ENCODE measurements at regions of chr2 and their contacts with region 1.

Region 1: DNA sequence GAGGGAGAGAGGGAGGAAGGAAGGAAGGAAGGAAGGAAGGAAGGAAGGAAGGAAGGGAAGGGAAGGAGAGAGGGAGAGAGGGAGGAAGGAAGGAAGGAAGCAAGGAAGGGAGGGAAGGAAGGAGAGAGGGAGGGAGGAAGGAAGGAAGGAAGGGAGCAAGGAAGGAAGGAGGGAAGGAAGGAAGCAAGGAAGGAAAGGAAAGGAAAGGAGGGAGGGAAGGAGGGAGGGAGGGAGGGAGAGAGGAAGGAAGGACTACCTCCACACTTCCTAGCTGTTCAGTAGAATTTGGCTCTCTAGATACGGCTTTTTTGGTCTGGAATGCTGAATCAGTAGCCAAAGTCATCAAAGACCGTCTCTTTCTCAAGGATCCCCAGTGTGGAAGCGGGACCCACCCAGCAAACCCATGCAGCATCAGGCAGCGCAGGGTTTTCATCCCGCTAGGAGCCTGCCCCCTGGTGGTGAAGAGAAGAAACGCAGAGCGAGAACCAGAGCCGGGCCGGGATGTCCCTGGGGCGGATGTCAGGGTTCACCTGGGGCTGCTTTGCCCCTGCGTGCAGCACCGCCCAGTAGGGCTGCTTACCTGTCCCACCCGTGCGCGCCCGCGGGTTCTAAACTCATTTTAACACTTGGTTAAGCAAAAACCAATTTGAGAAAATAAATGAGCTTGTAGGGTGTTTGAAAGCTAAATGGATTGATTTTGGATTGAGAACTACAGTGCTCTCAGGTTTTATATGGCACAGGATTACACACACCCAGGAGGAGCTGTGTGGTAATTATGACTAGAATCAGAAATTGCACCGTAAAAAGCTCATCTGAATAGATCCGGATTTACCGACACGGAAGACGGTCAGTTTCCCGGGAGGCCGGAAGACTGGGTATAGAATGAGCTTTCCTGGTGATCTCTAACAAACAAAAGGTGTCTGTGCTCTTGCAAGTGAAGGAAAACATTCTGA is 48.1 kb upstream of the ARL4C start:
- DNase-seq: peak; percentile 45 to 84 (median 71)
- ATAC-seq: peak; percentile 86 to 94 (median 92)
- H3K4me3 ChIP-seq: no peak overlapping the region
- H3K4me3 Mint-ChIP-seq: no peak overlapping the region
- H3K27ac ChIP-seq: no peak overlapping the region
- H3K27ac Mint-ChIP-seq: no peak overlapping the region
- H3K4me1 ChIP-seq: peaks cover 0 to 8% of the 10 kb centered on the region in 2 experiments
- H3K4me1 Mint-ChIP-seq: peaks cover 4 to 6% (median 6%) of the 10 kb centered on the region in 3 donors
- H3K27me3 ChIP-seq: peaks cover 4 to 19% of the 10 kb centered on the region in 2 experiments
- H3K27me3 Mint-ChIP-seq: peaks cover 18 to 33% of the 10 kb centered on the region in 2 donors

Region 2: DNA sequence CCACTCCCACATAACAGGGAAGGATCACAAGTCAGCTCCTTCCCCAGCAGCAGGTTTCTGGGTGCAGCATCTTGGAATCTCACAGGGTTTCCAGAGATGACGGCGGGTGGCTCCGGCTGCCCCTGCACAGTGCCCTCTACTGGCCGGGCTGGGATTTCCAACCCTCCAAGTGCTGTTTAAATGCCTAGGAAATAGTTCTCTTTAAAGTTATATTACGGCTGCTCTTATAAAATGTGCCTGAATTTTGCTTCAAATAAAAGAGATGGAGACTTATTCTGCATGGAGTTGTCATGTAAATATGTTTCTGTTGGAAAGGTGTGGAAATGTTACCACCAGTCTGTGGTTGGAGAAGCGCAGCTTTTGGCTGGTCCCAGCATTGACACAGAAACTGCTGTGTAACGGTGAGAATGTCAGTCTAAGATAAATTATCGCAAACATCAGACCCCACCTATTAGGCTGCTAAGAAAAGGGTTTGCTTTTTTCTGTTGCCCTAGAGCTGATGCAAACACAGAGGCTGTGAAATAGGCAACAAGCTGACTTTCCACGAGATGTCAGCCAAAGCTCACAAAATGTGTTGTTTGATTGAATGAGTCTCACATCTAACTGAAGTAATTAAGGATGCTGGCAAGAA is 687.3 kb before region 1 on chr2:
- CTCF ChIA-PET with region 1: interaction called in 1 of 2 experiments, 10 read pairs
- POLR2A ChIA-PET with region 1: no interaction called
- DNase-seq: peak in 27 of 35 experiments; percentile 15 to 65 (median 38)
- ATAC-seq: no peak
- H3K4me3 ChIP-seq: no peak overlapping the region
- H3K4me3 Mint-ChIP-seq: no peak overlapping the region
- H3K27ac ChIP-seq: no peak overlapping the region
- H3K27ac Mint-ChIP-seq: no peak overlapping the region
- H3K4me1 ChIP-seq: peaks cover 0 to 18% of the 10 kb centered on the region in 2 experiments
- H3K4me1 Mint-ChIP-seq: peaks cover 13 to 24% (median 24%) of the 10 kb centered on the region in 3 donors
- H3K27me3 ChIP-seq: peaks cover 0 to 10% of the 10 kb centered on the region in 2 experiments
- H3K27me3 Mint-ChIP-seq: peaks cover 3 to 4% of the 10 kb centered on the region in 2 donors

Region 3: DNA sequence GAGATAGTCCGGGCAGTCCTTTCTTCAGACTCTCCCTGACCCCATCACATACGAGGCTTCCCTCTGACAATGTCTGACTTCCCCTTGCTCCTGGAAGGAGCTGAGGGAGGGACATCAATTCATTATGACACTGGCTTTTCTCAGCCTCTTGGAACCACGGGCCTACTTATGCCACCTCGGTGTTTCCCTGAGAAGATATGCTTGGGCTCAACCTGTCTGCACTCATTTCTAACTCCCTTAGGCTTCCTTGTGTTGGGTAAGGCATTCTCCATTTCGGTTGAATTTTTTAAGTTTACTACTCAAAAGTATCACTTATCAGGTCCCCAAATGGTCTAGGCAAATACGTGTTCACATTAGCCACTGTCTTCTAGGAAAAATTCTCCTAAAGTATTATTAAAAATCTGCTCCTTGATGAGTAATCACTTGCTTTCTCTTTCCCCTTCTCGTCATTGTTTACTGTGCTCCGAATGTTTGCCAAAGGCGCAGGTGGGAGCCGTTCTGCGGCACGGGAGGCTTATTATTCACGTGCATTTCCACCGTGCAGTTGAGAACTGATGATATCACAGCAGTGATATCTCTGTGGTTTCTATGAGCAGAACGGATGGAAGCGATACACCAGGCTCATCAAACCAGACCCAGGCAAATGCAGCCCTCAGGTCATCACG is 81.2 kb before region 1 on chr2:
- CTCF ChIA-PET with region 1: no interaction called
- POLR2A ChIA-PET with region 1: no interaction called
- DNase-seq: peak; percentile 54 to 93 (median 79)
- ATAC-seq: peak; percentile 88 to 92 (median 90)
- H3K4me3 ChIP-seq: peak overlapping the region in 1 of 2 donors; percentile 23
- H3K4me3 Mint-ChIP-seq: peak overlapping the region; percentile 65 to 74 (median 71)
- H3K27ac ChIP-seq: peak overlapping the region; percentile 98
- H3K27ac Mint-ChIP-seq: peak overlapping the region; percentile 96 to 97
- H3K4me1 ChIP-seq: peaks cover 39 to 74% of the 10 kb centered on the region in 2 experiments
- H3K4me1 Mint-ChIP-seq: peaks cover 78 to 91% (median 81%) of the 10 kb centered on the region in 3 donors
- H3K27me3 ChIP-seq: no peaks in the 10 kb centered on the region
- H3K27me3 Mint-ChIP-seq: no peaks in the 10 kb centered on the region

Region 4: DNA sequence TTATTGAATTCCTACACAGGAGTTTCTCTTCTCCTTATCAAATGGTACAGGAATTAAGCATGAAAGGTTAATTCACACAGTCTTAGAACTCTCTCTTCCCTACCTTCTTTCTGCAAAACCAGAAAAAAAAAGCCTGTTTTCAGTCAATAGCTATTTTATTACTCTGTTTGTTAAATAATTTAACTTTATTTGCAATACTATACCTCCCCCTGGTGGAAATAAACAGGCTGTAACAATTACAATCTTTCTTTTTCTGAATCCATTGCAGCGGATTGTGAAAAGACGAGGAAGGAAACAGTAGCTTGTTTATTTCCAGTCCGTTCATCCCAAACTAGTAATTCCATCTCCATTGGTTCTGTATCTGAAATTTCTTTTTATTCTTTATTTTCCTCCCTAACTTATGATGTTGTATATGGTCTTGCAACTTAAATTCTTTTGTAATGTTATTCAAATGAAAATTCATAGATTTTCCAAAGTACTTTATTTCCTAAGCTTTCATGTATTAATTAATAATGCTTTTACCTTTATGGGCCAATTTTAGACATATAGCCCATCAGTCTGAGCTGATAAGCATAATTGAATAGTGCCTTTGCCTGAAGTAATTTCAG is 572.1 kb after region 1 on chr2:
- CTCF ChIA-PET with region 1: interaction called in 1 of 2 experiments, 22 read pairs
- POLR2A ChIA-PET with region 1: no interaction called
- DNase-seq: peak in 1 of 35 experiments; percentile 38
- ATAC-seq: no peak
- H3K4me3 ChIP-seq: no peak overlapping the region
- H3K4me3 Mint-ChIP-seq: no peak overlapping the region
- H3K27ac ChIP-seq: no peak overlapping the region
- H3K27ac Mint-ChIP-seq: no peak overlapping the region
- H3K4me1 ChIP-seq: no peaks in the 10 kb centered on the region
- H3K4me1 Mint-ChIP-seq: no peaks in the 10 kb centered on the region
- H3K27me3 ChIP-seq: peaks cover 2 to 12% of the 10 kb centered on the region in 2 experiments
- H3K27me3 Mint-ChIP-seq: peaks cover 23 to 26% of the 10 kb centered on the region in 2 donors

Measured in T-cell (primary cell).